ENCODE measurements at regions of chr2 and their contacts with region 1.

Region 1: DNA sequence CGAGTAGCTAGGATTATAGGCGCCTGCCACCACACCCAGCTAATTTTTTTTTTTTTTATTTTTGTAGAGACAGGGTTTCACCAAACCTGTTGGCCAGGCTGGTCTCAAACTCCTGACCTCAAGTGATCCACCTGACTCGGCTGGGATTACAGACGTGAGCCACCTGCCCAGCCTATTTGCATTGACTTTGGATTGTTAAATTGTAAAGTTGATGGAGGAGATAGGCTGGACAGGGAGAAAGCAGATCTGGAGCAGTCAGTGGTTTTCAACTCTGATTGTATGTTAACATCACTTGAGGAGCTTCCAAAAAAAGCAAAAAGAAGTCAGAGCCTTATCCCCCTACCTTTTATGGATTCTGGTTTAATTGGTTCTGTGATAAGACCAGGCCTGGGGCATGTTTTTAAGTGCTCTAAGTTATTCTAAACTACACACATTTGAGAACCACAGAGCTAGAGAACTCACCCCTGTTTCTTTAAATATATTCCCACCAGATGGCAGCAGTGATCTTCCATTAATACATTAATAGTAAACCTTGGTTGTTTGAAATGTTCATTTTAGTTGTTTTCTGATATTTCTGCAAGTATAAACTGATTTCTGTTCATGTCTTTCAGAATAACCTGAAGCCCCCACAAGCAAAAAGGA is 7.5 kb downstream of the C2orf49 start:
- DNase-seq: no peak
- H3K4me3 Mint-ChIP-seq: no peak overlapping the region
- H3K27ac Mint-ChIP-seq: no peak overlapping the region
- H3K4me1 Mint-ChIP-seq: peaks cover 5% of the 10 kb centered on the region
- H3K27me3 Mint-ChIP-seq: no peaks in the 10 kb centered on the region

Region 2: DNA sequence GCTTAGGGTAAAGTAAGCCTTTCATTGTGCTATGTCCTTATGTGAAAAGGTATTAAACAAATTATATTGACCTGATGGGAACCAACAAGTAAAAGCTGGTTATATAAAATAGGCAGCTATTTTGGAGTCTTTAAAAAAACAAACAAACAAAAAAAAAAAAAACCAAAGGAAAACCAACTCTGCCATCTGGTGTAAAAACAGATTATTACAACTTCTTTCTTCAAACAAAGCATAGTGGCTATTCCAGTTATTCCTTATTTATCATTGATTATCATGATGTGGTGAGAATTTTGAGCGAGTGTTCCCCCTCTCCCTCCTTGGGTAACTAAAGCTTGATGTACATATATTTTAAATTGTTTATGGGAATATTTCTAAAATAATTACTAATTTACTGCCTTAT is 176.4 kb after region 1 on chr2:
- intact Hi-C with region 1: loop called (anchors 1 kb)
- DNase-seq: no peak
- H3K4me3 Mint-ChIP-seq: no peak overlapping the region
- H3K27ac Mint-ChIP-seq: no peak overlapping the region
- H3K4me1 Mint-ChIP-seq: no peaks in the 10 kb centered on the region
- H3K27me3 Mint-ChIP-seq: peaks cover 2% of the 10 kb centered on the region

Region 3: GRCh38 chr2:106582148-106583143 is 1237.6 kb after region 1 on chr2:
- intact Hi-C with region 1: loop called (anchors 10 kb)
- DNase-seq: peak; percentile 36
- H3K4me3 Mint-ChIP-seq: peak overlapping the region; percentile 85
- H3K27ac Mint-ChIP-seq: no peak overlapping the region
- H3K4me1 Mint-ChIP-seq: peaks cover 18% of the 10 kb centered on the region
- H3K27me3 Mint-ChIP-seq: peaks cover 24% of the 10 kb centered on the region

Measured in activated T-helper 1 cell treated with anti-CD3 and anti-CD28 coated beads, Interleukin-12 subunit alpha, Interleukin-12 subunit beta, Interleukin-2, Interleukin-4 antibody, amounts not matched to agents 30 ng/mL and 10 ng/mL and 1 ng/mL, durations not matched to agents 14 hours and 24 hours and 36 hours (primary cell).